Caco-2 (cell line): ENCODE measurements at regions of chr3 and their contacts with region 1.

Region 1: DNA sequence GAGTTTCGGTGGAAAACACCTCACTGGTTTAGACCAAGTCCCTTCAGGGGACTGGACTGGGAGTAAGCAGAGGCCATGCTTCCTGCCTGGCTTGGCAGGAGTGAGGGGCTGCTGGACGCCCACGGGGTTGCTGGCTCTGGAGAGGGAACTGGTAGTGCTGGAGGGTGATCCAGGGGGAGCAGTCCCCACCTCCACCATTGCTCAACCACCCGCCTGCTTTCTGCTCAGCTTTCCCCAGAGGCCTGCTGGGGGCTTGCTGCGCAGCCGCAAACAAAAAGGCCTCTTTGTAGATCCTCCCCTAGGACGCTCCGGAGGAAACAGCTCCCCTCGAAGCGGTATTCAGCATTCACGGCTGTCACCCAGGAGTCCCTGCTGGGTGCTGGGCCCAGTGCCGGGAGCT is 33.5 kb downstream of the EBLN2 start:
- DNase-seq: no peak
- H3K4me3 ChIP-seq: no peak overlapping the region
- H3K4me3 Mint-ChIP-seq: no peak overlapping the region
- H3K27ac Mint-ChIP-seq: no peak overlapping the region
- H3K4me1 ChIP-seq: no peaks in the 10 kb centered on the region
- H3K4me1 Mint-ChIP-seq: peaks cover 6% of the 10 kb centered on the region
- H3K27me3 ChIP-seq: no peaks in the 10 kb centered on the region
- H3K27me3 Mint-ChIP-seq: no peaks in the 10 kb centered on the region
- CTCF ChIP-seq: no peak

Region 2: GRCh38 chr3:73179601-73180000 is 84.7 kb after region 1 on chr3:
- CTCF ChIA-PET with region 1: no interaction called
- POLR2A ChIA-PET with region 1: no interaction called
- intact Hi-C with region 1: loop called (anchors 1 kb)
- DNase-seq: no peak
- H3K4me3 ChIP-seq: no peak overlapping the region
- H3K4me3 Mint-ChIP-seq: no peak overlapping the region
- H3K27ac Mint-ChIP-seq: no peak overlapping the region
- H3K4me1 ChIP-seq: no peaks in the 10 kb centered on the region
- H3K4me1 Mint-ChIP-seq: no peaks in the 10 kb centered on the region
- H3K27me3 ChIP-seq: no peaks in the 10 kb centered on the region
- H3K27me3 Mint-ChIP-seq: peaks cover 2% of the 10 kb centered on the region
- CTCF ChIP-seq: no peak

Region 3: DNA sequence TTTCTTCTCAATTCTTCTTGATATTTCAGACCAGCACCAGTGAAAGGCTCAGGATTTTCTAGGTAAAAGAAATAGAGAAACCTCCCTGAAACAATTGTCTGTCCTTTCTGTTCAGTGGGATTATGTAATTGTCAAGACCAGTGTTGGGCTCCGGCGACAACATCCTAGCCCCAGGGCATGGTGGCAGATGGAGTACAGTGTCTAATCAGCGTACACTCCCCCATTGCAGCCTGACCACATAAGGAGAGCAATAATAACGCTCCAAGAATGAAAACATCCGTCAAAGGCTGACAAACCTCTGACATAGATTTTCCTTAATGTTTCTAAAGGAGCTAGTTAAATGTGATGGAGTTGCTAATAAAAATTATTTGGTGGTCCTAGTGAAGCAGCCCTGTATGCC is 111.1 kb after region 1 on chr3:
- CTCF ChIA-PET with region 1: no interaction called
- POLR2A ChIA-PET with region 1: no interaction called
- intact Hi-C with region 1: no loop called
- DNase-seq: no peak
- H3K4me3 ChIP-seq: no peak overlapping the region
- H3K4me3 Mint-ChIP-seq: no peak overlapping the region
- H3K27ac Mint-ChIP-seq: no peak overlapping the region
- H3K4me1 ChIP-seq: no peaks in the 10 kb centered on the region
- H3K4me1 Mint-ChIP-seq: no peaks in the 10 kb centered on the region
- H3K27me3 ChIP-seq: no peaks in the 10 kb centered on the region
- H3K27me3 Mint-ChIP-seq: no peaks in the 10 kb centered on the region
- CTCF ChIP-seq: no peak